ENCODE measurements at regions of chr10 and their contacts with region 1.

Region 1: DNA sequence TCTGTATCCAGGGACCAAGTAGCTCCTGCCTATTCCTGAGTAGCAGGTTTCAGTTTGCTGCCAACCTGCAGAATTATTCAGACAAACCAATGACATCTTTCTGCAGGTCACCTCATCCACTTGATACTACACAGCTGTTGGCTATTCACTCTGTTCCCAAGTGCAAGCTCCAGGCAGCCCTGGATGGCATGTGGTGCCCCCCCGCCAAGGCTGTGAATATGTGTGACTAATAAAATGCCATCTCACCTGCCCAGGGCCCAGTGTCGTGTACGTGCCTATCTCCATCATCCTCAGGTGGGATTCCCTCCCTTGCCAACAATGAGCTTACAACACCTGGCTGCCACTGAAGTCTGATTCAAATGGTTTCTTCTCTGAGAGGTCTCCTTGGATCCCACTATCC is 125.8 kb downstream of the RAB11FIP2 start:
- DNase-seq: no peak
- ATAC-seq: no peak
- H3K4me3 ChIP-seq: no peak overlapping the region
- H3K27ac ChIP-seq: no peak overlapping the region
- H3K4me1 ChIP-seq: no peaks in the 10 kb centered on the region
- H3K27me3 ChIP-seq: peaks cover 0 to 14% (median 6%) of the 10 kb centered on the region in 7 donors
- CTCF ChIP-seq: no peak

Region 2: DNA sequence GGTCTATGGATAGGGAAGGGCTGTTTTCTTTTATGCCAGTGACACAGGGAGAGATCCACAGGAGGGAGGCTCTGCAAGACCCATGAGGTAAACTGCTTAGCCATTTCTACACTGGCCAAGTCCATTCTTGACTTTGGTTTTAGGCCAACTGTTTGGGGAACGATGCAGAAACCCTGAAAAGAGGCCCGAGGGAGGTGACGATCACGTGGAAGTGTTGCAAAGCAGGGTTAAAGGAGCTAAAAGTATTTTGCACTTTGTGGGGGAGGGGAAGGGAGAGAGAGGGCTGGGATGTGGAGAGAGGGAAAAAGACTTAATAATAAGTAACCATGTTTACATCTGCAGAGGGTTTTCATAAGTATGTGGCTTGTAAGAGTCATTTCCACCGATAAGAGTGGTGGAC is 138.7 kb before region 1 on chr10:
- intact Hi-C with region 1: loop called in 1 of 10 experiments (anchors 5 kb)
- DNase-seq: no peak
- ATAC-seq: no peak
- H3K4me3 ChIP-seq: no peak overlapping the region
- H3K27ac ChIP-seq: no peak overlapping the region
- H3K4me1 ChIP-seq: no peaks in the 10 kb centered on the region
- H3K27me3 ChIP-seq: peaks cover 0 to 10% (median 0%) of the 10 kb centered on the region in 7 donors
- CTCF ChIP-seq: no peak

Region 3: DNA sequence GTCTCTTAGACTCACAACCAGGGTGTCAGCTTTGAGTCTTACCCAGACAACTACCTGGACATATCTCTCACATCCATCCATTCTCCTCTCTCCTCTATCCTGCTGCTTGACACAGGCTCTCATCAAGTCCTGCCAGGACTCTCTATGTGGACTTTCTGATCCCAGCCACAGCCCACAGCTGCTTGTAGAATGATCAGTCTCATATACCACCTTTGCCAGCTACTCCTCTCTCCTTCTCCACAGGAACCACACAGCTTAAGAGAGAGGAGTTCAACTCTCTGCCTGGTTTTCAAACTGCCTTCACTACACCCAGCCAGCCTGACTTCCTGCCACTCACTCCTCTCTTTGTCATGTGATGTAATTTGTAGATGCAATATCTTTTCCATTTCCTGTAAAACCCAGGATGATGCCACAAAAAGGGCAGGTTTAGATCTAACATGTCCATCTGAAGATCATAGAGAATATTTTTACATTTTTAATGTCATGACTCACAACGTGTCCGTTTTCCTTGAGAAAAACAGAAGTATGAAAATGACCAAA is 28.2 kb before region 1 on chr10:
- intact Hi-C with region 1: no loop called
- DNase-seq: no peak
- ATAC-seq: no peak
- H3K4me3 ChIP-seq: no peak overlapping the region
- H3K27ac ChIP-seq: no peak overlapping the region
- H3K4me1 ChIP-seq: no peaks in the 10 kb centered on the region
- H3K27me3 ChIP-seq: peaks cover 0 to 20% (median 5%) of the 10 kb centered on the region in 7 donors
- CTCF ChIP-seq: no peak